Common myeloid progenitor, CD34-positive (primary cell): ENCODE measurements at regions of chr1 and their contacts with region 1.

Region 1: DNA sequence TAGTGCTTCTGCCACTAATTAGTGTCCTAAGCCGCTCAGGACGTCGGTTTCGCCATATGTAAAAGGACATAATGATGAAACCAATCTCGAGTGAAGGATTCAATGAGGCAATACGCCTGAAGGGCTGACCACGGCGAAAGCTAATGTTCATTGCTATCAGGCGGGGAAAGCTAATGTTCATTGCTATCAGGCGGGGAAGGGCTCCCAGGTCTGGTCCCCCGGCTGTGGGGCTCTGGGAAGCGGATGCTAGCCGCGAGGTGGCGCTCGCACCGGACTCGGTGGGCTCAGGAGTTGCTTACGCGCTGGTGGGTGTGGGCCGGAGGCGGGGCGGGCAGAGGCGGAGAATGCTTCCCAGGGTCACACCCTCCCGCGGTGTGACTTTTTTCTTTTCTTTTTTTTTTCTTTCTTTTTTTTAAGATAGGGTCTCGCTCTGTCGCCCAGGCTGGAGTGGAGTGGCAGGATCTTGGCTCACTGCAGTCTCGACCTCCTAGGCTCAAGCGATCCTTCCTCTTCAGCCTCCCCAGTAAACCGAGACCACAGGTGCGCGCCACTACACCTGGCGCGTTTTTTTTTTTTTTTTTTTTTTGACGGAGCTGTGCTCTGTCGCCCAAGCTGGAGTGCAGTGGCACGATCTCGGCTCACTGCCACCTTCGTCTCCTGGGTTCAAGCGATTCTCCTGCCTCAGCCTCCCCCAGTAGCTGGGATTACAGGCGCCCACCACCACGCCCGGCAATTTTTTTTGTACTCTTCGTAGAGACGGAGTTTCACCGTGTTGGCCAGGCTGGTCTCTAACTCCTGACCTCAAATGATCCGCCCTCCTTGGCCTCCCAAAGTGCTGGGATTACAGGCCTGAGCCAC is 1.1 kb upstream of the PEAR1 start:
- DNase-seq: peak; percentile 91 to 96 (median 93)
- H3K4me3 ChIP-seq: peak overlapping the region in 5 of 7 experiments; percentile 38 to 78 (median 66)
- H3K27ac ChIP-seq: peak overlapping the region in 1 of 2 experiments; percentile 62
- H3K4me1 ChIP-seq: peaks cover 6 to 44% (median 42%) of the 10 kb centered on the region in 4 experiments
- H3K27me3 ChIP-seq: peaks cover 0 to 20% (median 9%) of the 10 kb centered on the region in 5 experiments

Region 2: GRCh38 chr1:156689035-156689952 is 203.1 kb before region 1 on chr1:
- CTCF ChIA-PET with region 1: interaction called, 19 read pairs
- POLR2A ChIA-PET with region 1: interaction called, 4 read pairs
- DNase-seq: peak; percentile 75 to 86 (median 85)
- H3K4me3 ChIP-seq: peak overlapping the region in 1 of 7 experiments; percentile 11
- H3K27ac ChIP-seq: no peak overlapping the region
- H3K4me1 ChIP-seq: peaks cover 0 to 42% (median 29%) of the 10 kb centered on the region in 4 experiments
- H3K27me3 ChIP-seq: peaks cover 0 to 59% (median 31%) of the 10 kb centered on the region in 5 experiments

Region 3: DNA sequence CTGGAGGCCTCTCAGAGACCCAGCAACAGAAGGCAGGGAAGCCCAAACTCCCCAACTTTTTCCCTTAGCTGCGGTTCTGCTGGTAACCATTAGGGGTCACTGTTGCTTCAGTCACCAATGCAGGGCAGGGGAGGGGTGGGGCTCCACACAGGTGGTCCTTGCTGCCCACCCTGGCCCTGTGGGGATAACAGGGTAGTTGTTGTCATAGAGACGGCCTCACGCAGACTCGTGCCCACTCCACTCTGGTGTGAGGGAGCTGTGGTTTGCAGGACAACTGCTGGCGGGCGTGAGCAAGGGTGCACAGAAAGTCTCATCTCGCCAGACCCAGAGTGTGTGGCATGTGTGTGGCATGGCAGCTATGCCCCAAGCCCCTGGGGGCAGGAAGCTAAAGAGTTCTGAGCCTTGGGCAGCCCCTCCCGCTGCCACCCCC is 53.4 kb before region 1 on chr1:
- CTCF ChIA-PET with region 1: interaction called, 101 read pairs
- POLR2A ChIA-PET with region 1: no interaction called
- DNase-seq: peak in 2 of 3 donors; percentile 59 to 68
- H3K4me3 ChIP-seq: no peak overlapping the region
- H3K27ac ChIP-seq: no peak overlapping the region
- H3K4me1 ChIP-seq: no peaks in the 10 kb centered on the region
- H3K27me3 ChIP-seq: peaks cover 0 to 42% (median 26%) of the 10 kb centered on the region in 5 experiments

Region 4: DNA sequence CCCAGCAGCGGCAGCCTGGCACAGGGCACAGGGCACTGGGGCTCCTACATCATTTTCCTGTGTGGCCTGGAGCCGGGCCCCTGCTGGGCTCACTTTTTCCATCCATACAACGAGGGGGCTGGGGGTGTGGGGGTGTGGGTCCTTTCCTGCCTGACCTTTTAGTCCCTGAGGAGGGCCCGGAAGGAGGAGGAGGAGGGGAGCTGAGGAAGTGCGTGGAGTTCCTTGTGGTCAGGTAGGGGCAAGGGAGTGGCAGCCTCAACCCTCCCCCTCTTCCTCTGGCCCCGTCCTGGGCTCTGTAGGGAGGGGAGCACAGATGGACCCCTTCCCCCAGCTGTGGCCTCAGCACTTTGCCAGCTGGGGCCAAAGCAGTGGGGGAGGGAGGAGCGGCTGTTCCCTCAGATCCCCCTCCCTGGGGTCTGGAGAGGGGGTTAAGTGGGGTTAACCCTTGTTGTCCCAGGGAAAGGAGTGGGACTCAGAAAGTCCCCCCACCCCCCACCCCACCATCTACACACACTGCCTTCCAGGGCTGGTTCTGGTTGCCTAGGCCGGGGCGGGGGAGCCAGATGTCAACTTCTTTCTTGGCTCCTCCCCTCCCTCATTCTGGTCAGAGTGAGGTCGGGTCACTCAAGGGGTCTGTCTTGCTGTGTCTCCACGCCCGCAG is 26.0 kb before region 1 on chr1:
- CTCF ChIA-PET with region 1: interaction called, 61 read pairs
- POLR2A ChIA-PET with region 1: no interaction called
- DNase-seq: no peak
- H3K4me3 ChIP-seq: no peak overlapping the region
- H3K27ac ChIP-seq: no peak overlapping the region
- H3K4me1 ChIP-seq: peaks cover 0 to 37% (median 31%) of the 10 kb centered on the region in 4 experiments
- H3K27me3 ChIP-seq: peaks cover 0 to 27% (median 12%) of the 10 kb centered on the region in 5 experiments

Region 5: DNA sequence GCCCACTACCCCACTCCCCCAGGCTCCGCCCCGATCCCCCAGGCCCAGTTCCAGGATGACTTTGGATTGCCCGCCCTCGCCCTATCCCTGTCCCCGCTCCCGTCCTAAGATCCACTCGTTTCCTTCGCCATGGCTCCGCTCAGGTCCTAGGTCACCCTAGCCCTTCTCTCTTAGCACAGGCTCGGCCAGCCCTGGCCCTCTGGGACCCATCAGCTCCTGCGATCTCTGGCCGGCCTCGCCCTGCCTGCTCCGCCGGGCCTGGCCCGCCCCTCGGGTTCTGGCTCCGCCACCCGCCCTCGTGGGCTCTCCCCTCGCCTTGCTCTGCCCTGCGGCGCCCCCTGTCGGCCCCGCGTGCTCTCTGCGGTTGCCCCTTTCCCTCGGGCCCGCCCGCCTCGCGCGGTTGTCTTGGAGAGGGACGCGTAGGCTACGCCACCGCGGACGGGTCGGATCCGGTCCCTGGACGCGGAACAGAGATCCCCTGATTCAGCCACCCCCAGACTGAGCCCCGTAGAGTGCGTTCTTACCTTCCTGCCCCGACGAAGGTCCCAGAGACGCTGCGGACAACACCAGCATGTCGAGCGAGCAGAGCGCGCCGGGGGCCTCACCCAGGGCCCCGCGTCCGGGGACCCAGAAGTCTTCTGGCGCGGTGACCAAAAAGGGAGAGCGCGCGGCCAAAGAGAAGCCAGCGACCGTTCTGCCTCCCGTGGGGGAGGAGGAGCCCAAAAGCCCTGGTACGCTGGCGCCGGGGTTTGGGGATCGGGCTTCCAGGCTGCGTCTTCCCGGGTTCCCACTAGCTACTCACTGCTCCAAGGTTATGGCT is 28.0 kb after region 1 on chr1 and contains the start of gene LRRC71:
- CTCF ChIA-PET with region 1: interaction called, 201 read pairs
- POLR2A ChIA-PET with region 1: interaction called, 4 read pairs
- DNase-seq: peak; percentile 82 to 87 (median 84)
- H3K4me3 ChIP-seq: peak within 1 kb of the TSS in 4 of 7 experiments; percentile 8 to 50 (median 37)
- H3K27ac ChIP-seq: no peak within 1 kb of the TSS
- H3K4me1 ChIP-seq: peaks cover 0 to 27% (median 17%) of the 10 kb centered on the region in 4 experiments
- H3K27me3 ChIP-seq: peaks cover 12 to 56% (median 39%) of the 10 kb centered on the region in 5 experiments

Region 6: DNA sequence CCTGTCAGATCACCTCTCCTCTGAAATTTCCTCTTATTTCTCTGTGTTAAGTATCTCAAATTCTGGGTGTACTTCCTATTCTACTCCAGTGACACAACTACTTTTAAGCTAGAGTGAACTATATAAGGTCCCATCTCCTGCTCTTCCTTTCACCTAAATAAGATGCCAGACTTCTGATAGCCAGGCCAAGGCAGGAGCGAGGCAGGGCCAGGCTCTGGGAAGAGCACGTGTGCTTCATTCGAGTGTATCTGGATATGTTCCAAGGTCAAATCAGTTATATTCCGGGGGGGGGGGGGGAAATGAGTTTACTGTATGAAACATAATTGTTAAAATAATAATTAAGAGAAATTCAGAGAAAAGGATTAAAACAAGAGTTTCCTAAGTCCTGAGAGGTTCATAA is 88.1 kb after region 1 on chr1:
- CTCF ChIA-PET with region 1: no interaction called
- POLR2A ChIA-PET with region 1: no interaction called
- DNase-seq: no peak
- H3K4me3 ChIP-seq: no peak overlapping the region
- H3K27ac ChIP-seq: no peak overlapping the region
- H3K4me1 ChIP-seq: no peaks in the 10 kb centered on the region
- H3K27me3 ChIP-seq: no peaks in the 10 kb centered on the region

Region 7: GRCh38 chr1:157176591-157177121 is 284.2 kb after region 1 on chr1:
- CTCF ChIA-PET with region 1: no interaction called
- POLR2A ChIA-PET with region 1: no interaction called
- DNase-seq: no peak
- H3K4me3 ChIP-seq: no peak overlapping the region
- H3K27ac ChIP-seq: no peak overlapping the region
- H3K4me1 ChIP-seq: peaks cover 0 to 16% (median 9%) of the 10 kb centered on the region in 4 experiments
- H3K27me3 ChIP-seq: no peaks in the 10 kb centered on the region